B cell (primary cell): ENCODE measurements at regions of chr11 and their contacts with region 1.

Region 1: GRCh38 chr11:9613118-9613829 is 39.8 kb downstream of the WEE1 start:
- DNase-seq: peak; percentile 90
- ATAC-seq: peak; percentile 31
- H3K4me3 ChIP-seq: peak overlapping the region; percentile 48 to 75 (median 66)
- H3K4me3 Mint-ChIP-seq: peak overlapping the region; percentile 98
- H3K27ac ChIP-seq: peak overlapping the region; percentile 98
- H3K27ac Mint-ChIP-seq: peak overlapping the region; percentile 99
- H3K4me1 ChIP-seq: peaks cover 66 to 78% of the 10 kb centered on the region in 2 donors
- H3K4me1 Mint-ChIP-seq: peaks cover 72% of the 10 kb centered on the region
- H3K27me3 ChIP-seq: no peaks in the 10 kb centered on the region
- H3K27me3 Mint-ChIP-seq: no peaks in the 10 kb centered on the region
- CTCF ChIP-seq: peak; percentile 92

Region 2: GRCh38 chr11:9460322-9461067 is 152.8 kb before region 1 on chr11 and contains the start of gene ZNF143:
- CTCF ChIA-PET with region 1: interaction called, 4 read pairs
- POLR2A ChIA-PET with region 1: interaction called, 3 read pairs
- intact Hi-C with region 1: loop called (anchors 1 kb)
- DNase-seq: peak; percentile 100
- ATAC-seq: peak; percentile 82
- H3K4me3 ChIP-seq: peak within 1 kb of the TSS; percentile 87 to 98 (median 93)
- H3K4me3 Mint-ChIP-seq: peak within 1 kb of the TSS; percentile 97
- H3K27ac ChIP-seq: peak within 1 kb of the TSS; percentile 95 to 99
- H3K27ac Mint-ChIP-seq: peak within 1 kb of the TSS; percentile 98
- H3K4me1 ChIP-seq: peaks cover 19 to 26% of the 10 kb centered on the region in 2 donors
- H3K4me1 Mint-ChIP-seq: peaks cover 26% of the 10 kb centered on the region
- H3K27me3 ChIP-seq: no peaks in the 10 kb centered on the region
- H3K27me3 Mint-ChIP-seq: no peaks in the 10 kb centered on the region
- CTCF ChIP-seq: no peak
- total RNA-seq, gene ZNF143: 54.9 and 56.5 TPM in 2 replicates

Region 3: GRCh38 chr11:9518835-9519410 is 94.4 kb before region 1 on chr11:
- CTCF ChIA-PET with region 1: no interaction called
- POLR2A ChIA-PET with region 1: no interaction called
- intact Hi-C with region 1: no loop called
- DNase-seq: no peak
- ATAC-seq: no peak
- H3K4me3 ChIP-seq: no peak overlapping the region
- H3K4me3 Mint-ChIP-seq: no peak overlapping the region
- H3K27ac ChIP-seq: no peak overlapping the region
- H3K27ac Mint-ChIP-seq: no peak overlapping the region
- H3K4me1 ChIP-seq: no peaks in the 10 kb centered on the region
- H3K4me1 Mint-ChIP-seq: no peaks in the 10 kb centered on the region
- H3K27me3 ChIP-seq: no peaks in the 10 kb centered on the region
- H3K27me3 Mint-ChIP-seq: no peaks in the 10 kb centered on the region
- CTCF ChIP-seq: no peak

Region 4: DNA sequence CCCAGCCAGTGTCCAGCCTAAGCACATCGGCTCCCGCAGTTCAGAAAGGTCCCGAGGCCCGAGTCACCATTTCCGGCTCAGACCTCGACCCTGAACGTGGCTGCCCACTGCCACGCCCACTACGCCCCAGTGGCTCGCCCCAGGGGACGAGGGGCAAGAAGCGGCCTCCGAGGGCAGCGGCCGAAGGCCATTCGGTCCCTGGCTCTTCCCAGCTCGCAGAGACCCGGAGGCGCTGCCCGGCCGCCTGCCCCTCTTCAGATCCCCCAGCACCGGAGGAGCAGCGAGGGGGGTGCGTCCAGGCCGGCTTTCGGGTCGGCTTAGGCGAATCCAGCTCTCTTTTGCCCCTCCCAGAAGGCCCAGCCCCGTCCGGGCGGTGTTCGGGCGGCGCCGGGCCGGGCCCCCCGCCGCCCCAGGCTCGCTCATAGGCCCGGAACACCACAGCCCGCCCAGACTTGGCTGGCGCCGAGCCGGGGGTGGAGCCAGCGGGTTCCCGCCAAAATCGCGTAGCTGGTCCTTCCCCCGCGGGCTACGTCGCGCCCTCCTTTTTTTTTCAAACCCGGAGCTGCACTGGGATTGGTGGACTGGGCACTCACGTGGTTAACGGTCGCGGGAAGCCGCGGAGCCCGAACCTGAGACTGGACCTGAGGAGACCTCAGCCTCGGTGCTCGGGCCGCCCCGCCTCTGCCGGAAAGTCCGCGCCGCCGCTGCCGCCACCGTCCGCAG is 40.1 kb before region 1 on chr11 and contains the start of gene WEE1:
- CTCF ChIA-PET with region 1: interaction called, 55 read pairs
- POLR2A ChIA-PET with region 1: interaction called, 11 read pairs
- intact Hi-C with region 1: loop called (anchors 1 kb)
- DNase-seq: peak; percentile 97
- ATAC-seq: peak; percentile 87
- H3K4me3 ChIP-seq: peak within 1 kb of the TSS; percentile 52 to 96 (median 90)
- H3K4me3 Mint-ChIP-seq: peak within 1 kb of the TSS; percentile 97
- H3K27ac ChIP-seq: peak within 1 kb of the TSS; percentile 83 to 89
- H3K27ac Mint-ChIP-seq: peak within 1 kb of the TSS; percentile 94
- H3K4me1 ChIP-seq: peaks cover 51 to 55% of the 10 kb centered on the region in 2 donors
- H3K4me1 Mint-ChIP-seq: peaks cover 64% of the 10 kb centered on the region
- H3K27me3 ChIP-seq: no peaks in the 10 kb centered on the region
- H3K27me3 Mint-ChIP-seq: no peaks in the 10 kb centered on the region
- CTCF ChIP-seq: no peak
- total RNA-seq, gene WEE1: 31.2 and 31.3 TPM in 2 replicates

Region 5: GRCh38 chr11:9651481-9651880 is 38.2 kb after region 1 on chr11:
- CTCF ChIA-PET with region 1: interaction called, 4 read pairs
- POLR2A ChIA-PET with region 1: interaction called, 12 read pairs
- intact Hi-C with region 1: no loop called
- DNase-seq: no peak
- ATAC-seq: no peak
- H3K4me3 ChIP-seq: no peak overlapping the region
- H3K4me3 Mint-ChIP-seq: no peak overlapping the region
- H3K27ac ChIP-seq: no peak overlapping the region
- H3K27ac Mint-ChIP-seq: no peak overlapping the region
- H3K4me1 ChIP-seq: peaks cover 2 to 15% of the 10 kb centered on the region in 2 donors
- H3K4me1 Mint-ChIP-seq: peaks cover 21% of the 10 kb centered on the region
- H3K27me3 ChIP-seq: no peaks in the 10 kb centered on the region
- H3K27me3 Mint-ChIP-seq: no peaks in the 10 kb centered on the region
- CTCF ChIP-seq: no peak

Region 6: DNA sequence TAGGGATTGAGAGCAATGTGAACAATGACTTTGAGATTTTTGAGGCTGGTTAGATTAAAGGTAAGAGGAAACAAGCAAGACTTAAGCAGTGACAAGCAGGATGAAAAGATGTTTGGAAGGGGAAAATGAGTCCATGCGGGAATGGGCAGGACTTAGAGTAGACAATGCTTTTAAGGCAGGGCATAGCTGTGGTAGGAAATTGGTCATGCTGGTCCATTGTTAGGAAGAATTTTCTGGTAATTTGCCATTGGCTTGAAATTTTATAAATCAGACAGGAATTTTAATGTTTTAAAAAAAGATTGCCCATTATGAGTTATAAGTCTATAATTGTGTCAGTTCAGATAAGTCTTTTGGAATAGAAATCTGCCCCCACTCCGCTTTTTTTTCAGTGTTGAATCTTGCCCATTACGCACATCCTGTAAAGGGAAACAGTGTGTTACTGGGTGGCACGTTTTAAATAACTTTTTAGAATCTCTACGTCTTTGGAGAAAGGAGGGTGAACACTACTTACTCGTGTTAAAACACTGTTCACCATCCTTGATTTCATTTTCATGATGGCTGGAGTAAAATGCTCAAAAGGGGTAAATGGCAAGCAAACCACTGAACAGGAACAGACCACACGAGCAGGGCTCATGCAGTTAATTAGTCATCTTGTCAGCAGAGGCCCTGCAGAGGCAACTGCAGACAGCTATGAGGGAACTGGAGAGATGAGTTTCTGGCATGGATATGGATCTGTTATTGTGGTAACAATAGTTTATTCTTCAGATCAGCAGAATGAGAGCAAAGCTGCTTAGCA is 75.6 kb after region 1 on chr11:
- CTCF ChIA-PET with region 1: interaction called, 19 read pairs
- POLR2A ChIA-PET with region 1: interaction called, 4 read pairs
- intact Hi-C with region 1: loop called (anchors 1 kb)
- DNase-seq: peak; percentile 78
- ATAC-seq: peak; percentile 74
- H3K4me3 ChIP-seq: peak overlapping the region in 4 of 5 experiments; percentile 7 to 50 (median 26)
- H3K4me3 Mint-ChIP-seq: no peak overlapping the region
- H3K27ac ChIP-seq: peak overlapping the region; percentile 91 to 96
- H3K27ac Mint-ChIP-seq: no peak overlapping the region
- H3K4me1 ChIP-seq: peaks cover 85 to 88% of the 10 kb centered on the region in 2 donors
- H3K4me1 Mint-ChIP-seq: peaks cover 60% of the 10 kb centered on the region
- H3K27me3 ChIP-seq: no peaks in the 10 kb centered on the region
- H3K27me3 Mint-ChIP-seq: no peaks in the 10 kb centered on the region
- CTCF ChIP-seq: no peak

Region 7: GRCh38 chr11:9726321-9727022 is 113.2 kb after region 1 on chr11:
- CTCF ChIA-PET with region 1: interaction called, 29 read pairs
- POLR2A ChIA-PET with region 1: interaction called, 6 read pairs
- intact Hi-C with region 1: no loop called
- DNase-seq: no peak
- ATAC-seq: peak; percentile 34
- H3K4me3 ChIP-seq: no peak overlapping the region
- H3K4me3 Mint-ChIP-seq: peak overlapping the region; percentile 65
- H3K27ac ChIP-seq: peak overlapping the region; percentile 14 to 86
- H3K27ac Mint-ChIP-seq: peak overlapping the region; percentile 87
- H3K4me1 ChIP-seq: peaks cover 68 to 76% of the 10 kb centered on the region in 2 donors
- H3K4me1 Mint-ChIP-seq: peaks cover 74% of the 10 kb centered on the region
- H3K27me3 ChIP-seq: no peaks in the 10 kb centered on the region
- H3K27me3 Mint-ChIP-seq: no peaks in the 10 kb centered on the region
- CTCF ChIP-seq: no peak

Region 8: GRCh38 chr11:9757809-9758636 is 144.7 kb after region 1 on chr11:
- CTCF ChIA-PET with region 1: interaction called, 226 read pairs
- POLR2A ChIA-PET with region 1: interaction called, 10 read pairs
- intact Hi-C with region 1: loop called (anchors 1 kb)
- DNase-seq: peak; percentile 96
- ATAC-seq: peak; percentile 59
- H3K4me3 ChIP-seq: peak overlapping the region; percentile 76 to 94 (median 79)
- H3K4me3 Mint-ChIP-seq: peak overlapping the region; percentile 91
- H3K27ac ChIP-seq: peak overlapping the region; percentile 88 to 89
- H3K27ac Mint-ChIP-seq: peak overlapping the region; percentile 97
- H3K4me1 ChIP-seq: peaks cover 55 to 60% of the 10 kb centered on the region in 2 donors
- H3K4me1 Mint-ChIP-seq: peaks cover 79% of the 10 kb centered on the region
- H3K27me3 ChIP-seq: no peaks in the 10 kb centered on the region
- H3K27me3 Mint-ChIP-seq: no peaks in the 10 kb centered on the region
- CTCF ChIP-seq: peak; percentile 85